ENCODE measurements at regions of chr11 and their contacts with region 1.

Region 1: GRCh38 chr11:31882951-31883392 is 71.8 kb upstream of the PAX6 start:
- DNase-seq: no peak
- ATAC-seq: no peak
- H3K4me3 ChIP-seq: no peak overlapping the region
- H3K4me3 Mint-ChIP-seq: no peak overlapping the region
- H3K27ac ChIP-seq: no peak overlapping the region
- H3K27ac Mint-ChIP-seq: no peak overlapping the region
- H3K4me1 ChIP-seq: no peaks in the 10 kb centered on the region
- H3K4me1 Mint-ChIP-seq: no peaks in the 10 kb centered on the region
- H3K27me3 ChIP-seq: peaks cover 0 to 21% of the 10 kb centered on the region in 2 experiments
- H3K27me3 Mint-ChIP-seq: peaks cover 13 to 14% of the 10 kb centered on the region in 2 donors

Region 2: GRCh38 chr11:31690516-31690915 is 192.5 kb before region 1 on chr11:
- CTCF ChIA-PET with region 1: interaction called in 1 of 2 experiments, 13 read pairs
- POLR2A ChIA-PET with region 1: no interaction called
- DNase-seq: no peak
- ATAC-seq: no peak
- H3K4me3 ChIP-seq: no peak overlapping the region
- H3K4me3 Mint-ChIP-seq: no peak overlapping the region
- H3K27ac ChIP-seq: no peak overlapping the region
- H3K27ac Mint-ChIP-seq: no peak overlapping the region
- H3K4me1 ChIP-seq: no peaks in the 10 kb centered on the region
- H3K4me1 Mint-ChIP-seq: peaks cover 0 to 5% (median 4%) of the 10 kb centered on the region in 3 donors
- H3K27me3 ChIP-seq: no peaks in the 10 kb centered on the region
- H3K27me3 Mint-ChIP-seq: no peaks in the 10 kb centered on the region